ENCODE measurements at regions of chr2 and their contacts with region 1.

Region 1: GRCh38 chr2:170928824-170929685 is at the start of gene GORASP2:
- DNase-seq: peak; percentile 99
- H3K4me3 ChIP-seq: peak within 1 kb of the TSS; percentile 88
- H3K27ac ChIP-seq: peak within 1 kb of the TSS; percentile 73
- H3K27me3 ChIP-seq: no peaks in the 10 kb centered on the region
- CTCF ChIP-seq: peak; percentile 85
- polyA plus RNA-seq, gene GORASP2: 173 and 222 TPM in 2 replicates

Region 2: GRCh38 chr2:170651624-170652325 is 277.3 kb before region 1 on chr2:
- CTCF ChIA-PET with region 1: no interaction called
- POLR2A ChIA-PET with region 1: no interaction called
- DNase-seq: no peak
- H3K4me3 ChIP-seq: no peak overlapping the region
- H3K27ac ChIP-seq: no peak overlapping the region
- H3K27me3 ChIP-seq: no peaks in the 10 kb centered on the region
- CTCF ChIP-seq: no peak

Region 3: DNA sequence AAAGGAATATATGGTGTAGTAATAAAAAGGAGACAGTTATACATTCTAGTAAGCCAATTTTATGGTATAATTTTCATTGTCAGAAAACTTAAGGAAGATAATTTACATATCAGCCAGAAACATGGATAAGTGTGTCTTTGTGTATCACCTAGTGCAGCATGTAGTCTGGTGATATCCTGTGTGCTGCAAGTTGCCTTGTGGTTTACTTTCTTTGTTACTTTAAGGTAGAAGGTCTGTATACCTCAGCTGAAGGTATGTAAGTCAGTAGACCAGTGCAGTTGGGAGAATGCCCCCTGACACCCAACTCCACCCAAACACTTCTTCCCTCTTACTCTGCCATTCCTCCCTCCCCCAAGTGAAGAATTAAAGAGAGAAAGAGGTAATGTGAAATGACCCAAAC is 11.0 kb after region 1 on chr2:
- CTCF ChIA-PET with region 1: interaction called, 26 read pairs
- POLR2A ChIA-PET with region 1: interaction called, 5 read pairs
- DNase-seq: no peak
- H3K4me3 ChIP-seq: no peak overlapping the region
- H3K27ac ChIP-seq: no peak overlapping the region
- H3K27me3 ChIP-seq: no peaks in the 10 kb centered on the region
- CTCF ChIP-seq: no peak

Region 4: DNA sequence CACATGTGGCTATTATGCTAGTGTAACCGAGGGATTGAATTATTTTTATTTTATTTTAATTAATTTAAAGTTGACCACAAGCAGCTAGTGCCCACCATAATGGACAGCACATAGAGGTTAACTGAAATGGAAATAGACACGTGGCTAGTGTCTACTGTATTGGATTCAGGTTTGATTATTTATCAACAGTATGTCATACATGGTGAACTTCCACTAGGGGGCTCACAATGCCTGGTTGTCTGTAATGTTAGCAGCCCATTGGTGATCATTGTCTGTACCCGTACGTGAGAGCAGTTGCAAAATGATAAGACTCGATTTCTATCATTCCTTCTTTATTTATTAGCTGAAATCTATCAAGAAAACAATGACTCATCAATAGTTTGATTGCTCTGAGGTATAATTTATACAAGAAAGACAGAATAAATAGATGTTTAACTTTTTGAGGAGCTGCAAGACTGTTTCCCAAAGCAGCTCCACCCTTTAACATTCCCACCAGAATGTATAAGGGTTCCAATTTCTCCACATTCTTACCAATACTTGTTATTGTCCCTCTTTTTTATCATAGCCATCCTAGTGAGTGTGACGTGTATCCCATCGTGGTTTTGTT is 669.8 kb after region 1 on chr2:
- CTCF ChIA-PET with region 1: interaction called, 10 read pairs
- POLR2A ChIA-PET with region 1: no interaction called
- DNase-seq: peak; percentile 34
- H3K4me3 ChIP-seq: no peak overlapping the region
- H3K27ac ChIP-seq: no peak overlapping the region
- H3K27me3 ChIP-seq: peaks cover 2% of the 10 kb centered on the region
- CTCF ChIP-seq: peak; percentile 89

Measured in AG04450 (cell line).